ENCODE measurements at regions of chr2 and their contacts with region 1.

Region 1: GRCh38 chr2:127106951-127107621 is at the start of gene BIN1:
- DNase-seq: peak; percentile 86 to 98 (median 95)

Region 2: GRCh38 chr2:127072970-127073369 is 34.1 kb before region 1 on chr2:
- intact Hi-C with region 1: loop called (anchors 5 kb)
- DNase-seq: peak; percentile 85 to 98 (median 94)

Region 3: GRCh38 chr2:127143841-127144782 is 37.0 kb after region 1 on chr2:
- intact Hi-C with region 1: loop called (anchors 5 kb)
- DNase-seq: peak in 41 of 42 donors; percentile 50 to 91 (median 80)